ENCODE measurements at regions of chr12 and their contacts with region 1.

Region 1: GRCh38 chr12:98998697-98999299 is 353.7 kb downstream of the APAF1 start:
- DNase-seq: no peak
- ATAC-seq: no peak
- H3K4me3 ChIP-seq: no peak overlapping the region
- H3K4me3 Mint-ChIP-seq: no peak overlapping the region
- H3K27ac ChIP-seq: no peak overlapping the region
- H3K27ac Mint-ChIP-seq: no peak overlapping the region
- H3K4me1 ChIP-seq: no peaks in the 10 kb centered on the region
- H3K4me1 Mint-ChIP-seq: no peaks in the 10 kb centered on the region
- H3K27me3 ChIP-seq: no peaks in the 10 kb centered on the region
- H3K27me3 Mint-ChIP-seq: peaks cover 0 to 8% (median 5%) of the 10 kb centered on the region in 5 donors

Region 2: DNA sequence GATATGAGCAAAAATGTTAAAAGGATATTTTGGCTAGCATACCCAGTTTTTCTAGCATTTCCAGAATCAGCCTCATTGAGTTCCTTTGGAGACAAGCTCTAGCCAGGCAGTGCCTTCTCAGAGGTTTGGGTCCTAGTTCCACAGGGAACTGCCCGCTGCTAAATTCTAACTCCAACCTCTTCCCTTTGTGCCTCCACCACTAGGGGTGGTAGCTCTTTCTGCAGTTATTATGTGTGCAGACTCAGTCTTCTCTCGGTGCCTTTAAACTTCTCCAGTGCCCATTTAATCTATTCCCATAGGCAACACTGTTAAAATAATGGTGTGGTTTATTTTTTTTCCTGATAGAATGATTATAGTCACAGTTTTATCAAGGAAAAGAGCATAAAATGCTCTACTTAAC is 426.8 kb before region 1 on chr12:
- CTCF ChIA-PET with region 1: no interaction called
- POLR2A ChIA-PET with region 1: no interaction called
- intact Hi-C with region 1: loop called in 1 of 2 experiments (anchors 2 kb)
- DNase-seq: no peak
- ATAC-seq: no peak
- H3K4me3 ChIP-seq: no peak overlapping the region
- H3K4me3 Mint-ChIP-seq: no peak overlapping the region
- H3K27ac ChIP-seq: no peak overlapping the region
- H3K27ac Mint-ChIP-seq: no peak overlapping the region
- H3K4me1 ChIP-seq: no peaks in the 10 kb centered on the region
- H3K4me1 Mint-ChIP-seq: peaks cover 0 to 1% (median under 1%) of the 10 kb centered on the region in 7 donors
- H3K27me3 ChIP-seq: no peaks in the 10 kb centered on the region
- H3K27me3 Mint-ChIP-seq: peaks cover 0 to 3% (median 0%) of the 10 kb centered on the region in 5 donors

Region 3: DNA sequence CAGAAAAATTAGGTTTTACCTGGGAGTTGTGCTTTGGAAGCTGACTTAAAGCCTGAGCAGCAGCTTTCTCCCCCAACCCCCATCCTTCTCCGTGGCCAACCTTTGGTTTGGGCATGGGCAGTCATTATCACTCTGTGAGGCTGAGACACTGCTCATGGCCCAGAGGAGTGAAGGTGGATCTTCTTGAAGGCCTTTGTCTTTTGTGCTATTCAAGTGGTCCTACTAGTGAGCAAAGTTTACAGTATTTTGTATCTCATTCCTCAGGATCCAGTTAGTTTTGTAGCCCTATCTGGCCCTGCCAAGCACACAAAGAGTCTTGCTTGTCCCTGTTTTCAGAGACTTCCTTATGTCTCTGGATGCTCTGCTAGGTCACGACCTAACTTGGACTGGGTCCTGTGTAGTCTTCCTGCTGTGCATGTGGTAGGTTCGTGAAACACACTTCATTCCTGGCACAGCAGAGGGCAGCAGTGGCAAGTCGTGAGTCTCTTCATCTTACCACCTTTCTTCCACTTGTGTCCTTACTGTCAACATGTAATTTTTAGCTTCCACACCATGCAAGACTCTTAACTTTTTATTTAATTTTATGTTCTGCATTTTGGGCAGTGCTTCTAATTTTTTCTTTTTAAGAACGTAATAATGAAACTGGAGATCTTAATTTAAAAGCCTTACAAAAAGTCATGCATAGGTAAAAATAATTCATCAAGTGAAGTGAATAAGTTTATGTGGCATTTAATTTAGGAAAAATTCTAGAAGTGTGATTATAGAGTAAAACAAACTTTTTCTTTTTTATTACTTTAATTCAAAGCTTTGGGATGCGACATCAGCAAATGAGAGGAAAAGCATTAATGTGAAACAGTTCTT is 300.0 kb before region 1 on chr12:
- CTCF ChIA-PET with region 1: no interaction called
- POLR2A ChIA-PET with region 1: no interaction called
- intact Hi-C with region 1: loop called in 1 of 2 experiments (anchors 1 kb)
- DNase-seq: peak in 5 of 9 donors; percentile 5 to 38 (median 24)
- ATAC-seq: peak; percentile 86
- H3K4me3 ChIP-seq: no peak overlapping the region
- H3K4me3 Mint-ChIP-seq: no peak overlapping the region
- H3K27ac ChIP-seq: no peak overlapping the region
- H3K27ac Mint-ChIP-seq: peak overlapping the region in 3 of 9 donors; percentile 26 to 81 (median 47)
- H3K4me1 ChIP-seq: no peaks in the 10 kb centered on the region
- H3K4me1 Mint-ChIP-seq: peaks cover 0 to 15% (median 9%) of the 10 kb centered on the region in 7 donors
- H3K27me3 ChIP-seq: no peaks in the 10 kb centered on the region
- H3K27me3 Mint-ChIP-seq: no peaks in the 10 kb centered on the region

Region 4: DNA sequence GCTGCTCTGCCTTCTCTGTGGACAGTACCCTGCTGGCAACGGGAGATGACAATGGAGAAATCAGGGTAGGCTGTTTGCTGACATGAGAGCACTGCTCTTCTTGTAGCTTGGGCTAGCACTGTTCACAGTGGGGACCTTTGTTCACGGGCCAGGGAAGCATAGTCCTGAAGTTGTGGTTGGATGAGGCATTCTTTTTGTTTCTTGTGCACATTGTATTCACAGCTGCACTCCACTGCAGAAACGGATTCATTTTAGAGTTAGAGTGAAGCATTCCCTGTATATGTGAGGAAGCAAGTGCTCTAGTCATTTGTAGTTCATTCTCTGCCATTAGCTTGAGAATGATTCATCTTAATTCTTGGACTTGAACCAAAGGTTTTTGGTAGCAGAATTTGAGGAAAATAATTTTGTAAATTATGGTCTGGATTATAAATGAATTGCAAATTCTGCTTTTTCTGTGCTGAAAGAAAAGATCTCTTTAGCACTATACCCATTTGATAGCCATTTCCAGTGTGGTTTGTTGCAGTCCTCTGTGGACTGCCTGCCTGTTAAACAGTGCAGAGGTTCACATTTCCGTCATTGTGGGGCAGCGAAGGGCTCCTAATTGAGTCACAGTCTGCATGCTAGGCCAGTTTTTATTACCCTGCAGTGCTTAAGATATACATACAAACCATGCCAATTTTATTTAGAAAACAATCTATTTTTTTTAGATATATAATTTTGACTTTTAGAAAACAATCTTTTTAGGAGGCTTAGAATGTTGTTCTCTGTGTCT is 273.1 kb before region 1 on chr12:
- CTCF ChIA-PET with region 1: interaction called, 5 read pairs
- POLR2A ChIA-PET with region 1: no interaction called
- intact Hi-C with region 1: loop called in 1 of 2 experiments (anchors 1 kb)
- DNase-seq: peak in 1 of 9 donors; percentile 53
- ATAC-seq: no peak
- H3K4me3 ChIP-seq: no peak overlapping the region
- H3K4me3 Mint-ChIP-seq: no peak overlapping the region
- H3K27ac ChIP-seq: no peak overlapping the region
- H3K27ac Mint-ChIP-seq: no peak overlapping the region
- H3K4me1 ChIP-seq: no peaks in the 10 kb centered on the region
- H3K4me1 Mint-ChIP-seq: peaks cover 0 to 12% (median 0%) of the 10 kb centered on the region in 7 donors
- H3K27me3 ChIP-seq: no peaks in the 10 kb centered on the region
- H3K27me3 Mint-ChIP-seq: no peaks in the 10 kb centered on the region

Region 5: GRCh38 chr12:99026332-99027054 is 27.7 kb after region 1 on chr12:
- CTCF ChIA-PET with region 1: no interaction called
- POLR2A ChIA-PET with region 1: no interaction called
- intact Hi-C with region 1: no loop called
- DNase-seq: no peak
- ATAC-seq: no peak
- H3K4me3 ChIP-seq: no peak overlapping the region
- H3K4me3 Mint-ChIP-seq: no peak overlapping the region
- H3K27ac ChIP-seq: no peak overlapping the region
- H3K27ac Mint-ChIP-seq: no peak overlapping the region
- H3K4me1 ChIP-seq: no peaks in the 10 kb centered on the region
- H3K4me1 Mint-ChIP-seq: no peaks in the 10 kb centered on the region
- H3K27me3 ChIP-seq: no peaks in the 10 kb centered on the region
- H3K27me3 Mint-ChIP-seq: peaks cover 7 to 22% (median 11%) of the 10 kb centered on the region in 5 donors

Region 6: GRCh38 chr12:99099786-99100185 is 101.0 kb after region 1 on chr12:
- CTCF ChIA-PET with region 1: no interaction called
- POLR2A ChIA-PET with region 1: no interaction called
- intact Hi-C with region 1: no loop called
- DNase-seq: no peak
- ATAC-seq: no peak
- H3K4me3 ChIP-seq: no peak overlapping the region
- H3K4me3 Mint-ChIP-seq: no peak overlapping the region
- H3K27ac ChIP-seq: no peak overlapping the region
- H3K27ac Mint-ChIP-seq: no peak overlapping the region
- H3K4me1 ChIP-seq: no peaks in the 10 kb centered on the region
- H3K4me1 Mint-ChIP-seq: no peaks in the 10 kb centered on the region
- H3K27me3 ChIP-seq: no peaks in the 10 kb centered on the region
- H3K27me3 Mint-ChIP-seq: peaks cover 0 to 10% (median 7%) of the 10 kb centered on the region in 5 donors

Region 7: GRCh38 chr12:99343960-99344359 is 345.2 kb after region 1 on chr12:
- CTCF ChIA-PET with region 1: no interaction called
- POLR2A ChIA-PET with region 1: no interaction called
- intact Hi-C with region 1: no loop called
- DNase-seq: no peak
- ATAC-seq: no peak
- H3K4me3 ChIP-seq: no peak overlapping the region
- H3K4me3 Mint-ChIP-seq: no peak overlapping the region
- H3K27ac ChIP-seq: no peak overlapping the region
- H3K27ac Mint-ChIP-seq: no peak overlapping the region
- H3K4me1 ChIP-seq: no peaks in the 10 kb centered on the region
- H3K4me1 Mint-ChIP-seq: no peaks in the 10 kb centered on the region
- H3K27me3 ChIP-seq: no peaks in the 10 kb centered on the region
- H3K27me3 Mint-ChIP-seq: no peaks in the 10 kb centered on the region